ENCODE measurements at regions of chr10 and their contacts with region 1.

Region 1: GRCh38 chr10:69318106-69318866 is 40.0 kb downstream of the HK1 start:
- DNase-seq: peak; percentile 93
- H3K4me3 ChIP-seq: peak overlapping the region; percentile 86
- H3K27ac ChIP-seq: peak overlapping the region; percentile 96
- H3K4me1 ChIP-seq: peaks cover 12% of the 10 kb centered on the region
- H3K27me3 ChIP-seq: no peaks in the 10 kb centered on the region
- CTCF ChIP-seq: no peak

Region 2: GRCh38 chr10:69237528-69238159 is 80.6 kb before region 1 on chr10:
- intact Hi-C with region 1: loop called (anchors 10 kb)
- DNase-seq: peak; percentile 90
- H3K4me3 ChIP-seq: no peak overlapping the region
- H3K27ac ChIP-seq: no peak overlapping the region
- H3K4me1 ChIP-seq: no peaks in the 10 kb centered on the region
- H3K27me3 ChIP-seq: no peaks in the 10 kb centered on the region
- CTCF ChIP-seq: peak; percentile 93

Region 3: GRCh38 chr10:69389827-69390490 is 71.7 kb after region 1 on chr10:
- intact Hi-C with region 1: loop called (anchors 10 kb)
- DNase-seq: no peak
- H3K4me3 ChIP-seq: no peak overlapping the region
- H3K27ac ChIP-seq: no peak overlapping the region
- H3K4me1 ChIP-seq: peaks cover 3% of the 10 kb centered on the region
- H3K27me3 ChIP-seq: no peaks in the 10 kb centered on the region
- CTCF ChIP-seq: no peak